ENCODE measurements at regions of chr15 and their contacts with region 1.

Region 1: GRCh38 chr15:71443538-71443937 is 328.3 kb downstream of the THSD4 start:
- DNase-seq: peak; percentile 31 to 56 (median 50)
- ATAC-seq: peak; percentile 51; the same call in 2 of the 3 replicates
- H3K4me3 ChIP-seq: no peak overlapping the region
- H3K27ac ChIP-seq: no peak overlapping the region
- H3K4me1 ChIP-seq: no peaks in the 10 kb centered on the region
- H3K27me3 ChIP-seq: no peaks in the 10 kb centered on the region
- CTCF ChIP-seq: peak; percentile 56 to 66 (median 64)
- EP300 ChIP-seq: no peak
- POLR2A ChIP-seq: no peak
- RAD21 ChIP-seq: peak; percentile 28 to 44; a peak in 3 of 4 replicates

Region 2: DNA sequence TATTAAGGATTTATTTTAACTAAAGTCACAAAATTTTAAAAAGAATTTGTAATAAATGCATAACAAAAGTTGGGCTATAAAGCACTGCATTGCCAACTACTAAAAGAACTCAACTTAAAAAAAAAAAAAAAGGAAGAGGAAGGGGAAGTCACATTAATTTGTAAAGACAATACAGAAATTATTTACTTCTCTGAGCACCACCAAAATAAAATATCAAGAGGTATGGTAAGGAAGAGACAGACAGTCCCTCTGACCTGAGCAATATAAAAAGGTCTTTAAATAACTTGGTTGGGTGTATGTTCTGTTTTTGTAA is 763.7 kb before region 1 on chr15:
- CTCF ChIA-PET with region 1: no interaction called
- POLR2A ChIA-PET with region 1: no interaction called
- in situ Hi-C with region 1: no loop called
- intact Hi-C with region 1: loop called (anchors 5 kb)
- DNase-seq: no peak
- ATAC-seq: no peak
- H3K4me3 ChIP-seq: no peak overlapping the region
- H3K27ac ChIP-seq: no peak overlapping the region
- H3K4me1 ChIP-seq: no peaks in the 10 kb centered on the region
- H3K27me3 ChIP-seq: 0 out of 5 replicates have a peak, but pooled peaks cover 0 to 5% of the 10 kb centered on the region in 2 experiments
- CTCF ChIP-seq: no peak
- EP300 ChIP-seq: no peak
- POLR2A ChIP-seq: no peak
- RAD21 ChIP-seq: no peak

Region 3: DNA sequence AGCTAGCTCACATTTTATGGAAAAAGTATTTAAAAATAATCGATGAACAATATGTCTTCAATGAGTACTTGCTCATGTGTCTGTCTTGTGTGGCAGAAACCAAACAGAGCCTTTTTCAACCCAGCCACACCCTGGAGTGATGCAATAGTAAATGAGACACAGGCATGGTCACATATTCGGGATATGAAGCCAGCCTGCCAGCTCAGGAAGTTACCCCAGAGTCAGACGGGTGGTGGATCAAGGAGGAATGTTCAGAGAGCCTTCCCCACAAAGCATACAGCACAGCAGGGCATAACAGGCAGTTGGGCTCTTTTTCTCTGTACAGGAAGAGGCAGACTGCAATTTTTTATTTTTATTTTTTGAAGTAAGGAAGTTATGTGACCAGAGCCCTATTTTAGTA is 616.9 kb before region 1 on chr15:
- CTCF ChIA-PET with region 1: no interaction called
- POLR2A ChIA-PET with region 1: no interaction called
- in situ Hi-C with region 1: no loop called
- intact Hi-C with region 1: loop called (anchors 2 kb)
- DNase-seq: no peak
- ATAC-seq: no peak
- H3K4me3 ChIP-seq: no peak overlapping the region
- H3K27ac ChIP-seq: no peak overlapping the region
- H3K4me1 ChIP-seq: no peaks in the 10 kb centered on the region
- H3K27me3 ChIP-seq: no peaks in the 10 kb centered on the region
- CTCF ChIP-seq: no peak
- EP300 ChIP-seq: no peak
- POLR2A ChIP-seq: no peak
- RAD21 ChIP-seq: no peak

Region 4: GRCh38 chr15:71114896-71115554 is 328.5 kb before region 1 on chr15 and contains the start of gene THSD4:
- CTCF ChIA-PET with region 1: interaction called, 10 read pairs
- POLR2A ChIA-PET with region 1: no interaction called
- in situ Hi-C with region 1: loop called (anchors 10 kb)
- intact Hi-C with region 1: loop called (anchors 5 kb)
- DNase-seq: peak; percentile 72 to 93 (median 90)
- ATAC-seq: peak; percentile 99
- H3K4me3 ChIP-seq: peak within 1 kb of the TSS; percentile 27
- H3K27ac ChIP-seq: no peak within 1 kb of the TSS
- H3K4me1 ChIP-seq: peaks cover 0 to 15% of the 10 kb centered on the region in 2 experiments; a peak in 2 of 5 replicates
- H3K27me3 ChIP-seq: peaks cover 9 to 13% of the 10 kb centered on the region in 2 experiments; a peak in 3 of 5 replicates
- CTCF ChIP-seq: peak; percentile 78 to 83 (median 83)
- EP300 ChIP-seq: no peak
- POLR2A ChIP-seq: no peak
- RAD21 ChIP-seq: peak; percentile 56 to 73
- polyA plus RNA-seq, gene THSD4: not detected

Measured in K562 (cell line).